ENCODE measurements at regions of chr22 and their contacts with region 1.

Region 1: DNA sequence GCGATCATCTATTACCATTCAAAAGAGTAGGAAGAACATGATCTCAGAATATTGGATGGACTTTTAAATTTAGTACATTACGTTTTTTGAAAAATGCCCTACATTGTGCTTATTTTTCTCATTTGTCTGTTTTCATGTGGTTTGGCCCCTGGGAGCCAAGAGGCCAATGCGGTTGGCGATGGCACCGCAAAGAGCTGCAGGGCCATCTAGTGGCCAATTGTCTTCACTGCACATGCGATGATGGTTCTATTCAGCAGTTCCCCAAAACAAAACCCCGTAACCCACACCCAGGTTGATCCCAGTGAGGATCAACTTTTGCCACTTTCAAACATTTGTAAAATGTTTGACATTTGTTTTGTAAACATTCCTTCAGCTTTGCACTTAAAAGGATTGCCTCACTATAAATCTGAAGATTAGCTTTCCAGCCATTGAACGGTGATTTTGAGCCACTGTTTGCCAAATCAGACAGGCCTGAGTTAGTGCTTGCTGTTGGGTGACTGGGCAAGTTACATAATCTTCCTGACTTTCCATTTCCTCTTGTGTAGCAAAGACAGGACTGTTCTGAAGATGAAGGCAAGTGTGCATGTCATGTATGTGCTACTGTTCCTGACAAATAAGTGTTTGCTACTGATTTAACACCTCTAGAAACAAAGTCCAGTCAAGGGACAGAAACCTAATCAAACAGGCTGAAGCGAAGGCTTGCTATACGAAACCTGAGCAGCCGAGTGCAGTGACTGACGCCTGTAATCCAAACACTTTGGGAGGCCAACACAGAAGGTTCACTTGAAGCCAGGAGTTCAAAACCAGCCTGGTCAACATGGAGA is 29.2 kb upstream of the XBP1 start:
- DNase-seq: peak; percentile 69
- H3K4me3 Mint-ChIP-seq: no peak overlapping the region
- H3K27ac Mint-ChIP-seq: no peak overlapping the region
- H3K4me1 Mint-ChIP-seq: no peaks in the 10 kb centered on the region
- H3K27me3 Mint-ChIP-seq: no peaks in the 10 kb centered on the region
- CTCF ChIP-seq: peak; percentile 94

Region 2: DNA sequence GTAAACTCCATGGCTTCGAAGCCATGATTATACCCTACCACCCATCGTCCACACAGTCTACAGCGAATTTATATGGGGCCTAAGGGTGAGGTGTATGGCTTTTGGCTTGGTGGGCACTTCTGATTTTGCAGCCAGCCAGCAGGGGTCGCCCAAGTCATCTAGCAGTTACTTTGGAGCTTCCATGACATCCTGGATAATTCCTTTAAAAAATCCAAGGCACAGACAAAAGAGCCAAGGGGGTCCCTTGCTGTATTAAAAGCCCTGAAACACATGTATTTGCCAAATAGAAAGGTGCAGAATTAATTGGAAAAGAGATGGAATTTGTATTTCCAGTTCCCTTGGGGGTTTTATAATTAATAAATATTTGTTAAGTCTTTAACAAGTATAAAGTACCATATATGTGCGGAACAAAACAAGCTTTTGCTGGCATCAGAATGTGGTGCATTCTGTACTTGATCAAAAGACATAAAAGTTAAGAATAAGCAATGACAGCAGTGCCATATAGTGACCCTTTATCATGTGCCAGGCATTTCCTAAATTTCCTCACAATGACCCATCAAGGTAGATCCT is 777.7 kb before region 1 on chr22:
- CTCF ChIA-PET with region 1: interaction called, 10 read pairs
- POLR2A ChIA-PET with region 1: no interaction called
- intact Hi-C with region 1: loop called (anchors 5 kb)
- DNase-seq: peak; percentile 65
- H3K4me3 Mint-ChIP-seq: no peak overlapping the region
- H3K27ac Mint-ChIP-seq: no peak overlapping the region
- H3K4me1 Mint-ChIP-seq: no peaks in the 10 kb centered on the region
- H3K27me3 Mint-ChIP-seq: peaks cover 44% of the 10 kb centered on the region
- CTCF ChIP-seq: peak; percentile 85

Region 3: DNA sequence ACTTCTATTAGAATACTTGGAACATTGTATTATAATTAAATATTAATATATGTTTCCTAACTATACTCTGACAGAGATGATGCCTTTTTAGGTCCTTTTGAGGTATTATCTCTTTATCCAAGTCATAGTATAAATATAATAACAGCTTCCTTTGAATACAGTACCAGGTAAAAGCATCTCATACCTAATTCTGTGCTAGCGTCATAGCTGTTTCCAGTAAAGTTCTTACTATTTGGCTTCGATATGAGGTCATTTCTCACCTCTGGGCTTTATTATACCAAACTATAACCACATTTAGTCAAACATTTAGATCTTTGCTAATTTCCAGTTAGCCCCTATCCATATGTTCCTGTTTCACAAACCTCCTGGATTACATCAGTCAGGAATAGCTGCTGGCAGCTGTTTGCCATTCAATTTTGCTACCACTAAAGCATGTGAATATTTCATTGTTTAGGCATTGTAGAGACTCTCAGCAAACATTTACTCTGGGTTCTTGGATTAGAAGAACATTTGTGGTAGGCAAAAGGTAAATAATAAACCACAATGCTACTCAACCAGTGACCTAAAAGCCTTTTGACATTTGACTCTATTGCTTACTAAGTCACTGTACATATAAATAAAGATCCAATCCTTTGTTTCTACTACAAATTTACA is 405.0 kb before region 1 on chr22:
- CTCF ChIA-PET with region 1: no interaction called
- POLR2A ChIA-PET with region 1: no interaction called
- intact Hi-C with region 1: no loop called
- DNase-seq: no peak
- H3K4me3 Mint-ChIP-seq: no peak overlapping the region
- H3K27ac Mint-ChIP-seq: no peak overlapping the region
- H3K4me1 Mint-ChIP-seq: no peaks in the 10 kb centered on the region
- H3K27me3 Mint-ChIP-seq: peaks cover 75% of the 10 kb centered on the region
- CTCF ChIP-seq: no peak

Region 4: GRCh38 chr22:28594797-28595462 is 234.6 kb before region 1 on chr22:
- CTCF ChIA-PET with region 1: interaction called, 131 read pairs
- POLR2A ChIA-PET with region 1: interaction called, 4 read pairs
- intact Hi-C with region 1: loop called (anchors 1 kb)
- DNase-seq: peak; percentile 68
- H3K4me3 Mint-ChIP-seq: no peak overlapping the region
- H3K27ac Mint-ChIP-seq: no peak overlapping the region
- H3K4me1 Mint-ChIP-seq: no peaks in the 10 kb centered on the region
- H3K27me3 Mint-ChIP-seq: peaks cover 48% of the 10 kb centered on the region
- CTCF ChIP-seq: peak; percentile 61

Region 5: DNA sequence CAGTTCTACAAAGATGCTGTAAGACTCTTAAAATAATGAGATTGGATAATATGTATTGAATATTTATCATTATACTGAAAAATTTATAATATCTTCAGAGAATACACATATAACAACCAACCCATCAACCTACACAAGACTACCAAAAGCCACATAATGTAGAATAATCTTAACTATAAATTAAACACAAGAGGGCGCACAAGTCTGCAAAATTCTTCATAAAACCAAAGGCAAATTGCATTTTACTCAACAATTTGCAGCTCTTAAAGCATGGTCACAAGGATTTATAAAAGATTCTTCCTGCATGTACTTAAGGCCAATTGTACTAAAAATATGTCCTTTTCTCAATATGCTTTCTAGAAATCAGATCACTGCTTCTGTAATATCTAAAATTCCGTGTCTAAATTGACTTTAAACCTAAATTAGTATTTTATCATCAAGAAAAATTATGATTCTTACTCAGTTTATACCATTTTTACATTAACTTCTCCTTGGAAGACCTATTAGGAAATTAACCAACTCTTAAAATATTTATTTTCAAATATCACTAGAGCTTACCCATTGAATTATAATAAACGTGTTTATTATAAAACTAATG is 228.9 kb before region 1 on chr22:
- CTCF ChIA-PET with region 1: interaction called, 131 read pairs
- POLR2A ChIA-PET with region 1: interaction called, 7 read pairs
- intact Hi-C with region 1: loop called (anchors 1 kb)
- DNase-seq: peak; percentile 56
- H3K4me3 Mint-ChIP-seq: no peak overlapping the region
- H3K27ac Mint-ChIP-seq: no peak overlapping the region
- H3K4me1 Mint-ChIP-seq: no peaks in the 10 kb centered on the region
- H3K27me3 Mint-ChIP-seq: peaks cover 21% of the 10 kb centered on the region
- CTCF ChIP-seq: peak; percentile 41

Region 6: GRCh38 chr22:28716686-28717085 is 112.9 kb before region 1 on chr22:
- CTCF ChIA-PET with region 1: no interaction called
- POLR2A ChIA-PET with region 1: no interaction called
- intact Hi-C with region 1: no loop called
- DNase-seq: no peak
- H3K4me3 Mint-ChIP-seq: no peak overlapping the region
- H3K27ac Mint-ChIP-seq: no peak overlapping the region
- H3K4me1 Mint-ChIP-seq: peaks cover 14% of the 10 kb centered on the region
- H3K27me3 Mint-ChIP-seq: no peaks in the 10 kb centered on the region
- CTCF ChIP-seq: no peak

Region 7: GRCh38 chr22:28783786-28784671 is 45.5 kb before region 1 on chr22:
- CTCF ChIA-PET with region 1: interaction called, 11 read pairs
- POLR2A ChIA-PET with region 1: interaction called, 5 read pairs
- intact Hi-C with region 1: no loop called
- DNase-seq: no peak
- H3K4me3 Mint-ChIP-seq: no peak overlapping the region
- H3K27ac Mint-ChIP-seq: no peak overlapping the region
- H3K4me1 Mint-ChIP-seq: no peaks in the 10 kb centered on the region
- H3K27me3 Mint-ChIP-seq: no peaks in the 10 kb centered on the region
- CTCF ChIP-seq: no peak

Region 8: DNA sequence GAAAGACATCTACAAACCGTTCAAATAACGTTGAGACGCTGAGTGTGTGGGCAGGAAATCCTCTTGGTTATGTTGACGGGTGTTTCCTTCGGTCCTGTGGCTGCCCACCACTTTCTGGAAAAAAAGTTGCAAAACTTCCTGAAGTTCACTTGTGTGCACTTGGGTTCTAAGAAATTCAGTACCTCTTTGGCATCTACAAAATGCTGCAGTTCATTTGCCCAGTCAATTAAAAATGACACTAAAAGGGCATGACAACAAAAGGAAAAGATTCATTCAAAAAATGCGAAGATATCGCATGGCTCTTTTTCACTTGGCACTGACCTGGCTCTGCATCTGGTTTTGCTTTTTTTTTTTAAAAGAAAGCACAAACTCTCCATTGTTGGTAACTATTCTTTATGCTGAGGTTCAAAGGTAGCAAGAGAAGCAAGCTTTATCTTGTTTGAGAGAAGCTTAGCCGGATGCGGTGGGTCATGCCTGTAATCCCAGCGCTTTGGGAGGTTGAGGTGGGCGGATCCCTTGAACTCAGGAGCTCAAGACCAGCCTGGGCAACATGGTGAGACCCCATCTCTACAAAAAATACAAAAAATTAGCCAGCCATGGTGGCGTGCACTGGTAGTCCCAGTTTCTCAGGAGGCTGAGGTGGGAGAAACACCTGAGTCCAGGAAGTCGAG is 18.6 kb before region 1 on chr22:
- CTCF ChIA-PET with region 1: interaction called, 26 read pairs
- POLR2A ChIA-PET with region 1: interaction called, 3 read pairs
- intact Hi-C with region 1: no loop called
- DNase-seq: no peak
- H3K4me3 Mint-ChIP-seq: no peak overlapping the region
- H3K27ac Mint-ChIP-seq: no peak overlapping the region
- H3K4me1 Mint-ChIP-seq: no peaks in the 10 kb centered on the region
- H3K27me3 Mint-ChIP-seq: no peaks in the 10 kb centered on the region
- CTCF ChIP-seq: no peak

Region 9: DNA sequence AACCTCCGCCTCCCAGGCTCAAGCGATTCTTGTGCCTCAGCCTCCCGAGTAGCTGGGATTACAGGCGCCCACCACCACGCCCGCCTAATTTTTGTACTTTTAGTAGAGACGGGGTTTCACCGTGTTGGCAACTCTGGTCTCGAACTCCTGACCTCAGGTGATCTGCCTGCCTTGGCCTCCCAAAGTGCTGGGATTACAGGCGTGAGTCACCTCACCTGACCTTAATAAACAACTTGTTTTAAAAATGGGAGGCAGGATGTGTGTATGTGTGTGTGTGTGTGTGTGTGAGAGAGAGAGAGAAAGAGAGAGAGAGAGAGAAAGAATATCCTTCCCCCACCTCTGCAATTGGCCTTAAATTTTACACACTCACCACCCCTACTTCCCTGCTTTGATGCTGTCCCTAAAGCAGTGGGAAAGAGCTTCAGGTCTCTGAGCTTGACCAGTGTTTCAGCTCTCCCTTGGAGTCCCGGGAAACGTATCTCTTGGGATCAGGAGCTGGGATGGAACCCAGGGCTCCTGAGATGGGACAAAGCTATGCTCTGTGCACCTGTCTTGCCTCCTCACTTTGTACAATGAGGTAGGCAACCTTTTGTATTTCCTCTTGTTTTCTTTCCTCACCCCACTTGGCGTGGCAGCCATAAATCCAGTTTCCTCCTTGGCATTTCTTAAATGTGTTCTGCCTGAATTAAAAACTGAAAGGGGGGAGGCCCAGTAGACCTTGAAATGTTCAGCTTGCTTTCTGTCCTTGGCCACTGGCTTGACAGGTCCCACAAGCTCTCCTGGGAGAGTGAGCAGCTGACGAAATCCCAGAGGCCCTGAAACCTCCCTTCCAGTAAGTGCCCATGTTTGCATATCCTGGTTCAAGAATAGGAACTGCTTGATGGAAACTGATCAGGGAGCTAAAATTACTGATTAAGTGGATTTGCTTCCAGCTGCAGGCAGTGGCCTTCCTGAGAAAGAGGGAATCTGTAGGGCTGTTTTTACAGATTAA is 11.4 kb before region 1 on chr22:
- CTCF ChIA-PET with region 1: interaction called, 26 read pairs
- POLR2A ChIA-PET with region 1: interaction called, 3 read pairs
- intact Hi-C with region 1: no loop called
- DNase-seq: no peak
- H3K4me3 Mint-ChIP-seq: no peak overlapping the region
- H3K27ac Mint-ChIP-seq: no peak overlapping the region
- H3K4me1 Mint-ChIP-seq: no peaks in the 10 kb centered on the region
- H3K27me3 Mint-ChIP-seq: no peaks in the 10 kb centered on the region
- CTCF ChIP-seq: no peak

Measured in MCF 10A (cell line).